Common myeloid progenitor, CD34-positive (primary cell): ENCODE measurements at regions of chr9 and their contacts with region 1.

Region 1: GRCh38 chr9:16884952-16885513 is 14.6 kb upstream of the BNC2 start:
- DNase-seq: peak; percentile 93 to 99 (median 97)
- H3K4me3 ChIP-seq: peak overlapping the region in 1 of 7 experiments; percentile 21
- H3K27ac ChIP-seq: no peak overlapping the region
- H3K4me1 ChIP-seq: peaks cover 8 to 34% (median 21%) of the 10 kb centered on the region in 4 experiments
- H3K27me3 ChIP-seq: peaks cover 0 to 3% (median 0%) of the 10 kb centered on the region in 5 experiments

Region 2: GRCh38 chr9:16801871-16802466 is 83.1 kb before region 1 on chr9:
- CTCF ChIA-PET with region 1: no interaction called
- POLR2A ChIA-PET with region 1: no interaction called
- DNase-seq: no peak
- H3K4me3 ChIP-seq: no peak overlapping the region
- H3K27ac ChIP-seq: no peak overlapping the region
- H3K4me1 ChIP-seq: no peaks in the 10 kb centered on the region
- H3K27me3 ChIP-seq: peaks cover 0 to 4% (median 0%) of the 10 kb centered on the region in 5 experiments

Region 3: DNA sequence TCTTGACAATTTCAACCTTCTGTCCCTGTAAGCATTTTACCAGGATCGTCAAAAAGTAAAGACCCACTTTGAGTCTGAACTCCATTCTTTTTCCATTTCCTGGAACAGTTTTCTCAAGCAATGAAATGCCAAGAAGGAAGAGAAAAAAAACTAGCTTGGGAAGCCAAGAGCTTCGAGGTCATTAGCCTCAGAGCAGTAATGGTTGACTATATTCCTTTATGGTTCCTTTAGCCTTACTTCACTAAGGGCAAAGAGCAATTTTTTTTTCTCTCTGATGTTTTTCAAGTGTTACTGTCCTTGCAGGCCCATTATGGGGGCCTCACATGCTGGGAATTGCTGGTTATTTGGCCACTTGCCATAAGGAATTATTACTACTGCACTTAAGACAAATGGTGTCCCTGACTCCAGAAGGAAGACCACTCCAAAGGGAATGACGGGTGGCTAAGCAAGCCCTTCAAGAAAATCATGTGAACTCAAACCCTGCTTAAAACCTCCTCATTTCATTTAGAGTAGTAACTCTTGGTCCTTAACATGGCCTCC is 51.7 kb before region 1 on chr9:
- CTCF ChIA-PET with region 1: no interaction called
- POLR2A ChIA-PET with region 1: no interaction called
- DNase-seq: no peak
- H3K4me3 ChIP-seq: no peak overlapping the region
- H3K27ac ChIP-seq: no peak overlapping the region
- H3K4me1 ChIP-seq: peaks cover 0 to 4% (median 0%) of the 10 kb centered on the region in 4 experiments
- H3K27me3 ChIP-seq: peaks cover 2 to 32% (median 10%) of the 10 kb centered on the region in 5 experiments

Region 4: GRCh38 chr9:16871356-16872151 is 13.5 kb before region 1 on chr9:
- CTCF ChIA-PET with region 1: interaction called, 10 read pairs
- POLR2A ChIA-PET with region 1: interaction called, 10 read pairs
- DNase-seq: peak; percentile 86 to 94 (median 92)
- H3K4me3 ChIP-seq: peak overlapping the region in 6 of 7 experiments; percentile 57 to 78 (median 65)
- H3K27ac ChIP-seq: no peak overlapping the region
- H3K4me1 ChIP-seq: peaks cover 8 to 30% (median 27%) of the 10 kb centered on the region in 4 experiments
- H3K27me3 ChIP-seq: peaks cover 13 to 50% (median 24%) of the 10 kb centered on the region in 5 experiments

Region 5: GRCh38 chr9:17090041-17090440 is 205.0 kb after region 1 on chr9:
- CTCF ChIA-PET with region 1: no interaction called
- POLR2A ChIA-PET with region 1: no interaction called
- DNase-seq: no peak
- H3K4me3 ChIP-seq: no peak overlapping the region
- H3K27ac ChIP-seq: no peak overlapping the region
- H3K4me1 ChIP-seq: no peaks in the 10 kb centered on the region
- H3K27me3 ChIP-seq: peaks cover 0 to 4% (median 0%) of the 10 kb centered on the region in 5 experiments